Heart right ventricle (tissue), 16 donors: ENCODE measurements at regions of chr2 and their contacts with region 1.

Region 1: DNA sequence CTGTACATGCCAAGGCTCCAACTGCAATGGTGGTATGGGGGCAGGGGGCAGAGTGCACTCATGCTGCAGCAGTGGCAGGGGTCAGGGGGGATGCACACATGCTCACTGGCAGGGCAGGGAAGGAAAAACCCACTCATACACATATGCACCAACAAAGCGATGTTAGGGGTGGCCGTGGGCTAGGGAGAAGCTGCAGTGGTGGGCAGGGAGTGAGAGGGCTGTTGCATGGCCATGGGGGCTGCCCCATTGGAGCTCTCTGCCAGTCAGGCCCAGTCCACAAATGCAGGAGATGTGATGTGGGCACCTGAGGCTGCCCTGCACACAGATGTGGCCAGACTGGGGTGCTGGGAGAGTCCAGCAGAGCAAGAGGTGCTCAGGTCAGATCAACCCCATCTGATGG is 238.1 kb upstream of the NXPH2 start:
- DNase-seq: no peak
- ATAC-seq: no peak
- H3K4me3 ChIP-seq: no peak overlapping the region
- H3K27ac ChIP-seq: no peak overlapping the region
- H3K4me1 ChIP-seq: no peaks in the 10 kb centered on the region
- H3K27me3 ChIP-seq: no peaks in the 10 kb centered on the region
- CTCF ChIP-seq: no peak

Region 2: GRCh38 chr2:138867341-138867740 is 150.9 kb before region 1 on chr2:
- intact Hi-C with region 1: no loop called
- DNase-seq: no peak
- ATAC-seq: no peak
- H3K4me3 ChIP-seq: no peak overlapping the region
- H3K27ac ChIP-seq: no peak overlapping the region
- H3K4me1 ChIP-seq: no peaks in the 10 kb centered on the region
- H3K27me3 ChIP-seq: peaks cover 0 to 5% (median 0%) of the 10 kb centered on the region in 7 donors
- CTCF ChIP-seq: no peak

Region 3: DNA sequence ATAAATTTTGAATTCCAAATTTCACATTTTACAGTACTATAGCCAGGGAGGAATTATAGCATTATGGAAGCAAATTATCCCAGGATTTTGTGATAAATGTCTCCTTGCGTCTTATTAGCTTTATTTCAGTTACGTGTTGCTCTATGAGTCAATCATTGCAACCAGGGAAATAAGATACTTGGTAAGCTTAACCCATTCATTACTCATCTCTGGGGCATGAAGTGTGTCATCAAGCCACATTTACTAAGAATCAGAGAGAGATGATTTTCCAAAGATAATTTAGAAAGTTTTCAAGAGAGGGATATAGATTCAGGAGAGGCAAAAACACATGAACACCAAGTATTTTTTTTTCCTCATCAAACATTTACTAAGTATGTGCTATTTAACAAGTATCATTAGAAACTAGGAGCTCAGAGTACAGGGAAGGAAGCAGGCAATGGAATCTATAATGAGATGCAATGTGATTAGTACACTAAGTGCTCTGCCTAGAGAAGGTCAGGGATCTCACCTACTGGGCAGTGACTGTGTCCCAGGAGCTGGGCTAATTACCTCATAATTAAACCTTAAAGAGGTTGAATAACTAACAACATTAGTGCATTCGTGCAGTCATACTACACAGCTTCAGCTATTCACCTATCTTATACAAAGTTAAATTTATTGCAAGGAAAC is 20.3 kb before region 1 on chr2:
- intact Hi-C with region 1: loop called in 1 of 10 experiments (anchors 1 kb)
- DNase-seq: no peak
- ATAC-seq: no peak
- H3K4me3 ChIP-seq: no peak overlapping the region
- H3K27ac ChIP-seq: no peak overlapping the region
- H3K4me1 ChIP-seq: no peaks in the 10 kb centered on the region
- H3K27me3 ChIP-seq: no peaks in the 10 kb centered on the region
- CTCF ChIP-seq: no peak

Region 4: GRCh38 chr2:139055202-139055601 is 37.0 kb after region 1 on chr2:
- intact Hi-C with region 1: no loop called
- DNase-seq: no peak
- ATAC-seq: no peak
- H3K4me3 ChIP-seq: no peak overlapping the region
- H3K27ac ChIP-seq: no peak overlapping the region
- H3K4me1 ChIP-seq: no peaks in the 10 kb centered on the region
- H3K27me3 ChIP-seq: no peaks in the 10 kb centered on the region
- CTCF ChIP-seq: no peak